Ascending aorta (tissue), 2 donors: ENCODE measurements at regions of chr1 and their contacts with region 1.

Region 1: DNA sequence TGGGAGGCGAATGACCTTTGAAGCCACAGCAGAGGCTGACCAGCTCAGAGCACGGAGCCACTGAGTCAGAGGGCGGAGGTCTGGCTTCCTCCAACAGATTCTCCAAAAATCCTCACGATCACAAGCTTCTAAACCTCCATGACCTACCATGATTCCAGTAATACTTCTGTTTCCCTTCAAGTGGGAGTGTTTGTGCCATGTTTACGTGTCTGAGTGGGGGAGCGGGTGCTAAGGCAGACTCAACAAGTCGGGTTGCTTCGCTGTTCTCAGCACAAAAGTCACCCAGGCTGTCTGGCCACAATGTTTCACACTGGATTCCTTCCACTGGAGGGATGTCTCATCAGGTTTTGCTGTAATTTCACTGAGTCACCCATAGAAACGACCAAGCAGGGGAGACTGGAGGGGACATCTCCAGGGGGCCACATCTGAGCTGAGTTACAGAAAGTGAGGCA is 86.2 kb downstream of the SLC66A1 start:
- DNase-seq: peak in 1 of 2 donors; percentile 83
- H3K4me3 ChIP-seq: no peak overlapping the region
- H3K27ac ChIP-seq: peak overlapping the region; percentile 82 to 86
- H3K4me1 ChIP-seq: peaks cover 31 to 69% of the 10 kb centered on the region in 2 donors
- H3K27me3 ChIP-seq: no peaks in the 10 kb centered on the region
- CTCF ChIP-seq: peak; percentile 49 to 71 (median 49)

Region 2: GRCh38 chr1:19179597-19180264 is 218.6 kb before region 1 on chr1:
- intact Hi-C with region 1: no loop called
- DNase-seq: no peak
- H3K4me3 ChIP-seq: no peak overlapping the region
- H3K27ac ChIP-seq: no peak overlapping the region
- H3K4me1 ChIP-seq: no peaks in the 10 kb centered on the region
- H3K27me3 ChIP-seq: no peaks in the 10 kb centered on the region
- CTCF ChIP-seq: peak in 1 of 3 experiments; percentile 9

Region 3: DNA sequence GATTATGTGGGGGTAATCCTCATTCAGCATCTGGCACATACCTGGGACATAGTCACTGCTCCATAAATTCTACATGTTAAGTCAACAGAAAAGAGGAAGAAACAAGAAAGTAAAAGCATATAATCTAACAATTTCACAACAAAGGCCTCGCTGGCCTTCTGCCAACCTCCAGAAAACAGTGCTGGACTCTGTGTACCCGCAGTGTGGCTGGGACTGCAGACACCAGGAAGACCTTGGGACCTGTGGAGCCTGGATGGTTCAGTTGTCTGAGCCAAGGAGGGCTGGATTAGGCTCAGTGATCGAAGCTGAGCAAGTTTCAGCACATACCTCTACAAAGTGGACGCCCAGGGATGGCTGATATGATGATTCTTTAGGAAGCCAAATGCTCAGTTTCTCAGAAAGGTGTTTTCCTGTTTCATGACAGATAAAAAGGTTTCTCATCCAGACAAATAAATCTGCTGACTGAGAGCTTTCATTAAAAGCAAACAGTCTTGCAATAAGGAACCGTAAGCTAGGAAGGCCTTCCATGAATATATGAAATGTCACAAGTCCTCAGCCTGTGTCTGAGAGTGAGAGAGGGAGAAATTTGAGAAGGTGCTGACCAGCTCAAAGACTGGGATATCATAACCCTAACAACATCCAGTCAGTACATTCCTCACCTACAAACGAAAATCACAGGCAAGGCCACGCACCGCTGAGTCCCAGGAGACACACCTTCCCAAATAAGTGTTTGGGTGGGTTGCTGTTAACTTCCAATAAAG is 38.6 kb after region 1 on chr1:
- intact Hi-C with region 1: loop called (anchors 2 kb)
- DNase-seq: peak in 1 of 2 donors; percentile 88
- H3K4me3 ChIP-seq: peak overlapping the region in 1 of 2 donors; percentile 36
- H3K27ac ChIP-seq: peak overlapping the region; percentile 84 to 91
- H3K4me1 ChIP-seq: peaks cover 49 to 87% of the 10 kb centered on the region in 2 donors
- H3K27me3 ChIP-seq: no peaks in the 10 kb centered on the region
- CTCF ChIP-seq: no peak

Region 4: DNA sequence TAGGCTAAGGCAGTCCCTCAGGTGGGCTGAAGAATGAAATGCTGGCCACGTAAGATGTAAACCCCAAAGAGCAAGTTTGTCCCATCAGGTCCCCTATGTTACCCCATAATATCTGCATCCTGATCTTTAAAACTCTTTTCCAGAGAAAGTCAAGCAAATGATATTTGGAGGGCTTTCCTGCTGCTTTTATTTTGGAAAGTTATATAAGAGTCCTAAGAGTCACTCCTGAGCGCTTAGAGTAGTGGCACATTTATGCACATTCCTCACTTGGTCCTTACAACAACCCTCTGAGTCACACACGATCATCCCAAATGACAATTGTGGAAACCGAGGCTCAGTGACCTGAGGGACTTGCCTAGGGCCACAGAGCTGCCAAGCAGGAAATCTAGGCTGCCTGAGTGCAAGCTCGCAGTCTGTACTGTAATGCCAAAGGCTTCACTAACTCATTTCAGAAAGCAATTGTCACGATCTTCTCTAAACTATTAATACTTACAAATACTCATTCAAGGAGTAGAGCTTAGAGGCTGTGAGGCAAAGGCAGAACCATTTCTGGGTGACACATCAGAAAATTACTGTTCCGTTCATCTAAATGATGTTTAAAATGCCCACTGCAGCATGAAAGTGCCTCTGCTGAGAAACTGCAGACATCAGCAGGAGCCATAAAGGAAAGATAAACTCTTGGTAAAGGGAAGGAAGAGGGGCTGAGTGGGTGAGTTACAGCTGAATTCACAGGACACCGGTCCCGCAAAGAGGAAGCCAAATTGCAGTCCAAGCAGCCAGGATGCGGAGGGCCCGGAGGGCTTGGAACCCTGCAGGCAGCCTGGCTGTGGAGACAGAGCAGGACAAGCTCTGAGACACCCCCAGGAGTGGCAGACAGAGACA is 56.2 kb after region 1 on chr1:
- intact Hi-C with region 1: loop called (anchors 2 kb)
- DNase-seq: no peak
- H3K4me3 ChIP-seq: peak overlapping the region in 1 of 2 donors; percentile 12
- H3K27ac ChIP-seq: peak overlapping the region; percentile 89 to 93
- H3K4me1 ChIP-seq: peaks cover 44 to 92% of the 10 kb centered on the region in 2 donors
- H3K27me3 ChIP-seq: no peaks in the 10 kb centered on the region
- CTCF ChIP-seq: no peak

Region 5: GRCh38 chr1:19563324-19564097 is 165.2 kb after region 1 on chr1:
- intact Hi-C with region 1: loop called (anchors 5 kb)
- DNase-seq: peak in 1 of 2 donors; percentile 76
- H3K4me3 ChIP-seq: peak overlapping the region; percentile 39 to 50
- H3K27ac ChIP-seq: peak overlapping the region; percentile 82
- H3K4me1 ChIP-seq: peaks cover 2 to 15% of the 10 kb centered on the region in 2 donors
- H3K27me3 ChIP-seq: no peaks in the 10 kb centered on the region
- CTCF ChIP-seq: no peak